ENCODE measurements at regions of chr15 and their contacts with region 1.

Region 1: DNA sequence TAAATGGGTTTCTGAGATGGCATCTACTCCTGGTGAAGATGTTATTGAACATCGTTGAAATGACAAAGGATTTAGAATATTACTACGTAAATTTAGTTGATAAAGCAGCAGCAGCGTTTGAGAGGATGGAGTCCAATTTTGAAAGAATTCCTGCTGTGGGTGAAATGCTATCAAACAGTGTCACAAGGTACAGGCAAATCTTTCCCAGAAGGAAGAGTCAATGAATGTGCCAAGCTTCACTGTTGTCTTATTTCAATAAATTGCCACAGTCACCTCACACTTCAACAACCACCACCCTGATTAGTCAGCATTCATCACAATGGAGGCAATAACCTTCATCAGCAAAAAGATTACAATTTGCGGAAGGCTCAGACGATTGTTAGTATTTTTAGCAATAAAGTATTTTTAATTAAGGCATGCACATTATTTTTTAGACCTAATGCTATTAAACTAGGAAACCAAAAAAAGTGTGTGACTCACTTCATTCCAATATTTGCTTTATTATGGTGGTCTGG is 142.8 kb downstream of the UNC13C start:
- DNase-seq: no peak

Region 2: GRCh38 chr15:54150255-54150654 is 29.2 kb after region 1 on chr15:
- intact Hi-C with region 1: no loop called
- DNase-seq: no peak

Region 3: DNA sequence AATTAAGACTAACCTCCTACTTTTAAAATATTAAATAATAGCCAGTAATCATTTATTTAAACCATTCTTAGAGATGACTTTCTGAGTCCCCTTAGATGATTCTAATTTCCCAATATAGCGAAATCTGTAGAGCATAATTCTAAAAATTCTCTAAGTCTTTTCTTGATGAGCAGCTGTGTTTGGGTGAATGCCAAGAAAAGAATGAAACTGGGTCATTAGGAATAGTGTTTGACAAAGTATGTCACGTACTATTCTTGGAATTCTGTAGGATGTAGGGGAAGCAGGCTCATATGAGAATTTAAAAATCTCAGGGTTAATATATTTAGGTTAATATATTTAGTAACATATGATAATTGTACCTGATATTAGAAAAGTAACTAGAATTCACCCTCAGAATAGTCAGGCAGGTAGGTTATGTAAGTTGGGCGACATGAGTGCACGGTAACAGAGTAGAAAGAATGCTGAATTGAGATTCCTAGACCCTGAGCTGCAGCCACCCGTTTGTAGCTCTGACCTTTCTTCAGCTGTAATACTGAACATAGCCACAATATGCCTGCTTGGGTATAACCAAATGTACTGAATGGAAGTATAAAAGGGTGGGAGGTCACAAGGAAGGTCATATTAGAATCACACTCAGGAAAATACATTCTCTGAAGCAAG is 381.5 kb after region 1 on chr15:
- intact Hi-C with region 1: loop called in 1 of 2 experiments (anchors 10 kb)
- DNase-seq: no peak